ENCODE measurements at regions of chr12 and their contacts with region 1.

Region 1: DNA sequence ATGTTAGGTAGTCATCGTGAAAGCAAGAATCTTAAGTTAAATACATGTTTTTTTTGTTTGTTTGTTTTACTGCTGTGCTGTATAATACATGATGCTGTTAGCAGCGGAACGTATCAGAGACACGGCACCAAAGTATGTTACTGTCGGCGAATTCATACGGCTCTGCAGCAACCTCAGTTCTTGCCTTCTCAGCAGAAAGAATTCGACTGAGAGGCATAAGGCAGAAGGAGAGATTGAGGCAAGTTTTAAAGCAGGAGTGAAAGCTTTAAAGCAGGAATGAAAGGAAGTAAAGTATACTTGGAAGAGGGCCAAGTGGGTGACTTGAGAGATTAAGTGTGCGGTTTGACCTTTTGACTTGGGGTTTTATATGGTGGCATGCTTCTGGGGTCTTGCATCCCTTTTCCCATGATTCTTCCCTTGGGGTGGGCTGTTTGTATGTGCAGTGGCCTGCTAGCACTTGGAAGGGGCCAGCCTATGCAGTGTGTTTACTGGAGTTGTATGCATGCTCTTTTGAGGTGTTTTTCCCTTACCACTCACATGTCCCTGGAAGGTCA is 23.7 kb downstream of the LEMD3 start:
- DNase-seq: no peak
- ATAC-seq: no peak
- H3K4me3 Mint-ChIP-seq: no peak overlapping the region
- H3K27ac Mint-ChIP-seq: peak overlapping the region; percentile 43
- H3K4me1 Mint-ChIP-seq: peaks cover 57% of the 10 kb centered on the region
- H3K27me3 Mint-ChIP-seq: no peaks in the 10 kb centered on the region

Region 2: DNA sequence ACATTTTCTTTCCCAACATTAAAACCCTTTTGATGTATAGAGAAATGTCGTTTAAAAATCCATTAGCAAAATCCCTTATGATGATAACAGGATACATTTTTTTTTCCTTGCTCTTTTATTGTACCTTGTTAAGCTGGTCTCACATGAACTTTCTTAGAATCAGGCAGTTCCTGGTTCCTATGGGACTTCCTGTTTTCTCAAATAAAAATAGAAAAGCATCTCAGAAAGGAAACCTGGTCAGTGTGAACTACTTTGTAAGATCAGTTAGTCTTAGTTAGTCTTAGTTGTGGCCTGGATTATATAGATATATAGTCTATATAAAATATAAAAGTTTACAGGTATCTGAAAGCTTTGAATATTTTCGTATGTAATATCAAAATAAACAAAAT is 16.6 kb after region 1 on chr12:
- CTCF ChIA-PET with region 1: interaction called, 3 read pairs
- POLR2A ChIA-PET with region 1: no interaction called
- intact Hi-C with region 1: loop called in 1 of 2 experiments (anchors 2 kb)
- DNase-seq: no peak
- ATAC-seq: no peak
- H3K4me3 Mint-ChIP-seq: peak overlapping the region; percentile 47
- H3K27ac Mint-ChIP-seq: peak overlapping the region; percentile 88
- H3K4me1 Mint-ChIP-seq: peaks cover 50% of the 10 kb centered on the region
- H3K27me3 Mint-ChIP-seq: no peaks in the 10 kb centered on the region

Region 3: GRCh38 chr12:65248656-65249633 is 55.9 kb after region 1 on chr12:
- CTCF ChIA-PET with region 1: no interaction called
- POLR2A ChIA-PET with region 1: no interaction called
- intact Hi-C with region 1: no loop called
- DNase-seq: peak; percentile 18
- ATAC-seq: peak; percentile 85
- H3K4me3 Mint-ChIP-seq: no peak overlapping the region
- H3K27ac Mint-ChIP-seq: peak overlapping the region; percentile 72
- H3K4me1 Mint-ChIP-seq: peaks cover 16% of the 10 kb centered on the region
- H3K27me3 Mint-ChIP-seq: no peaks in the 10 kb centered on the region

Measured in activated CD4-positive, alpha-beta T cell treated with anti-CD3 and anti-CD28 coated beads for 36 hours (primary cell).